Activated naive CD4-positive, alpha-beta T cell treated with anti-CD3 and anti-CD28 coated beads for 36 hours (primary cell): ENCODE measurements at regions of chr3 and their contacts with region 1.

Region 1: GRCh38 chr3:130759699-130760338 is 13.2 kb upstream of the PIK3R4 start:
- DNase-seq: peak; percentile 77
- H3K4me3 Mint-ChIP-seq: no peak overlapping the region
- H3K27ac Mint-ChIP-seq: no peak overlapping the region
- H3K4me1 Mint-ChIP-seq: no peaks in the 10 kb centered on the region
- H3K27me3 Mint-ChIP-seq: peaks cover 14% of the 10 kb centered on the region

Region 2: GRCh38 chr3:130276203-130276803 is 483.5 kb before region 1 on chr3:
- CTCF ChIA-PET with region 1: no interaction called
- intact Hi-C with region 1: loop called (anchors 5 kb)
- DNase-seq: peak; percentile 18
- H3K4me3 Mint-ChIP-seq: no peak overlapping the region
- H3K27ac Mint-ChIP-seq: no peak overlapping the region
- H3K4me1 Mint-ChIP-seq: no peaks in the 10 kb centered on the region
- H3K27me3 Mint-ChIP-seq: peaks cover 25% of the 10 kb centered on the region

Region 3: GRCh38 chr3:130905551-130905950 is 145.7 kb after region 1 on chr3:
- CTCF ChIA-PET with region 1: no interaction called
- intact Hi-C with region 1: no loop called
- DNase-seq: no peak
- H3K4me3 Mint-ChIP-seq: no peak overlapping the region
- H3K27ac Mint-ChIP-seq: no peak overlapping the region
- H3K4me1 Mint-ChIP-seq: peaks cover 61% of the 10 kb centered on the region
- H3K27me3 Mint-ChIP-seq: no peaks in the 10 kb centered on the region